Mucosa of descending colon (tissue), 3 donors: ENCODE measurements at regions of chr12 and their contacts with region 1.

Region 1: DNA sequence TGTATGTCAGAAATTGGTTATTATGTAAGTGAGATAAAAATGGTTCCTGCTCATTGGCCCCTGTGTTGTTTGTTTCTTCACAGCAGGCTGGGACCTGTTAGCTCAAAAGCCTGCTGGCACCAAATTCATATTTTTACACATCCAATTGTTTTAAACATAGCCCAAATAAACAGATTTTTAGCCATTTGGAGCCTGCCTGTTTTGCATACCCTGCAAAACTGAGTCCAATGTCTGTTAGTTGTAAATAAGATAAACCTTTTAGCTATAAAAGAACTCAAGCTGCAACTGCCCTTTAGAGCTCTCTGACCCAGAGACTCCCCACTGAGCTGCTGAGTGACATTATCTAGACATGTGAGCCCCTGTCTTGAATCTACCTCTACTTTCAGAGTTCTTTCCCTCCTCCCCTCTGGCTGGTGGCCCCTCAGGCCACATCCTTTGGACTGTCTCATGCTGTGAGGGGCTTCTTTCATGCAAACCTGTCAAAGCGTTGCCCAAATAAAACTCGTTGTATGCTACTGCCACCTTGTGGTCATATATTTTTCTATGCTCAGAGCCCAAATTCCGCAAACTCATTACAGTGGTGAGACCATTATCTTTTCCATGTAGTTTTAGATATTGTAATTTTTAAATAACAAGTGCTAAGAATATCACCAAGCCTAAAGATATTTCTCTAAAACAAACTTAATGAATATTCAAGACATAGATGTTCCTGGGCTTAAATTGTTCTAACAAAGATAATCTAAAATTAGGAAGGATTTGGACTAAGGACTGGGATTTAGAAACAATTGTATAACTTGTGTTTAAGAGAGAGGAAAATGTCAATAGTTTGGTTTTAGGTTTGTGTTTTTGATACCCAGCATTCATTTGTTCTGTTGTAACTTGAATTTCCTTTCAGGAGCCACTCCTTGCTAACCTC is 337.9 kb downstream of the AACS start:
- DNase-seq: peak in 1 of 3 donors; percentile 35
- ATAC-seq: no peak
- H3K4me3 ChIP-seq: no peak overlapping the region
- H3K4me1 ChIP-seq: no peaks in the 10 kb centered on the region
- CTCF ChIP-seq: no peak

Region 2: DNA sequence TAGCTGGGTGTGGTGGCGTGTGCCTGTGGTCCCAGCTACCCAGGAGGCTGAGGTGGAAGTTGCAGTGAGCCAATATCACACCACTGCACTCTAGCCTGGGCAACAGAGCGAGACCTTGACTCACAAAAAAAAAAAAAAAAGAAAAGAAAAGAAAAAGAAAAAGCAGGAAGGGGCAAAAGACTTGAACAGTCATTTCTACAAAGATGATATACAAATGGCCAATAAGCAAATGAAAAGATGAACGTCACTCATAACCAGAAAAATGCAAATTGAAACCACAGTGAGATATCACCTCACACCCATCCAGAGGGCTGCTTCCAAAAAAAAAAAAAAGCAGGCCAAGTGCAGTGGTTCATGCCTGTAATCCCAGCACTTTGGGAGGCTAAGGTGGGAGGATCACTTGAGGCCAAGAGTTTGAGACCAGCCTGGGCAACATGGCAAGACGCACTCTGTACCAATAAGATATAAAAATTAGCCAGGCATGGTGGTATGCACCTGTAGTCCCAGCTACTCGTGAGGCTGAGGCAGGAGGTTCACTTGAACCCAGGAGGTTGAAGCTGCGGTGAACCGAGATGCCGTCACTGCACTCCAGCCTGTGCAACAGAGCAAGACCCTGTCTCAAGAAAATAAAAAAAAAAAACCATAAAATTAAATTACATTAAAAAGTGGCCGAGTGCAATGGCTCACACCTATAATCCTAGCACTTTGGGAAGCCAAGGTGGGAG is 509.2 kb before region 1 on chr12:
- intact Hi-C with region 1: no loop called
- DNase-seq: no peak
- ATAC-seq: no peak
- H3K4me3 ChIP-seq: no peak overlapping the region
- H3K4me1 ChIP-seq: no peaks in the 10 kb centered on the region
- CTCF ChIP-seq: no peak

Region 3: GRCh38 chr12:125183187-125184067 is 219.7 kb before region 1 on chr12:
- intact Hi-C with region 1: loop called in 1 of 2 experiments (anchors 5 kb)
- DNase-seq: peak; percentile 78 to 86 (median 84)
- ATAC-seq: peak; percentile 81
- H3K4me3 ChIP-seq: no peak overlapping the region
- H3K4me1 ChIP-seq: peaks cover 12% of the 10 kb centered on the region
- CTCF ChIP-seq: peak; percentile 96

Region 4: GRCh38 chr12:125330645-125331341 is 72.3 kb before region 1 on chr12:
- intact Hi-C with region 1: loop called in 1 of 2 experiments (anchors 10 kb)
- DNase-seq: peak; percentile 58 to 85 (median 80)
- ATAC-seq: peak; percentile 96
- H3K4me3 ChIP-seq: no peak overlapping the region
- H3K4me1 ChIP-seq: no peaks in the 10 kb centered on the region
- CTCF ChIP-seq: peak; percentile 84

Region 5: DNA sequence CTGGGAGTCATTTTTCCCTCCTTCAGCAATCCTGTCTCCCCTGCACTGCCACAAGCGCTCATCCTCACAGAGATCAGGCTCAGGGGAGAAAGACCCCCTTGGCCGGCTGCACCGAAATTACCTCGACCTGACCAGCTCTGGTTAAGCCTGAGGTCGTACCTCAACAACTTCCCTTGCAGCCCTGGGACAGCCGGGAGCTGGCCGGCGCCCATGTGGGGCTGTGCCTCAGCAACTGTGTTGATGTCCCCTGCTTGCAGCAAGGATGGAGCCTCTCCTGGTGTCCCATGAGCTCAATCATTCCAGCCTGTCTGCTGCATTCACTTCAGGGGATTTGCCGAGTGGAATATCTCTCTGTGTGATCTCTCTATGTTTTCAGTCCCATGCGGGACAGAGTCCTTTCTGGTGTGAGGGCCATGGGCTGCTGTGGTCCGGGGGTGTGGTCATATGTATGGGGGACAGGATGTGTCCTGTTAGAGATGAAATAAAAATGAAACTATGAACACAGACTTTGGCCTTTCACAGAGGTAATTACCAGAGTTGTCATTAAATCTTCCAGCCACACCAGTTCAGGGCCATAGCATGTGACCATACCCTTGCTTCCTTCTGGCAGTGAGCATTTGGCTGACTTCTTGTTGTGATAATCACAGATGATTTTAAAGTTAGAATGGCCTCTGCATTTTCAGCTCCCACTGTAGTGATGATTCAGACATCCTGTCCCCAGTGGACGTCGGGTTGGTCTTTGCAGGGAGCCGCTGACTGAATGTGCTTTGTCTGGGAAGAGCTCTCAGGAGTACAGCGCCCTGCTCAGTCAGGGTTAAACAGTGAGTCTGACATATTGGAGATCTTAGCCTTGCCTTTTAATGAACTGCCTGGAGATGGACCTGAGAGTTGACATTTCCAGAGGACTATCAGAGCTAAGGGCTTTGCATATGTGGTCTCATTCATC is 68.0 kb after region 1 on chr12:
- intact Hi-C with region 1: no loop called
- DNase-seq: peak in 2 of 3 donors; percentile 34 to 42
- ATAC-seq: peak; percentile 90
- H3K4me3 ChIP-seq: no peak overlapping the region
- H3K4me1 ChIP-seq: peaks cover 3% of the 10 kb centered on the region
- CTCF ChIP-seq: no peak

Region 6: GRCh38 chr12:125734142-125734541 is 331.0 kb after region 1 on chr12:
- intact Hi-C with region 1: no loop called
- DNase-seq: no peak
- ATAC-seq: no peak
- H3K4me3 ChIP-seq: no peak overlapping the region
- H3K4me1 ChIP-seq: no peaks in the 10 kb centered on the region
- CTCF ChIP-seq: no peak